Activated CD8-positive, alpha-beta memory T cell treated with anti-CD3 and anti-CD28 coated beads, Interleukin-2, amount 10 ng/mL, durations not matched to agents 7 days and 5 days (primary cell): ENCODE measurements at regions of chr3 and their contacts with region 1.

Region 1: GRCh38 chr3:111616417-111617105 is 21.4 kb upstream of the ZBED2 start:
- DNase-seq: peak; percentile 85
- ATAC-seq: peak; percentile 93
- H3K4me3 Mint-ChIP-seq: peak overlapping the region; percentile 9
- H3K27ac Mint-ChIP-seq: peak overlapping the region; percentile 93
- H3K4me1 Mint-ChIP-seq: peaks cover 73% of the 10 kb centered on the region
- H3K27me3 Mint-ChIP-seq: no peaks in the 10 kb centered on the region

Region 2: GRCh38 chr3:111547631-111548030 is 68.9 kb before region 1 on chr3:
- CTCF ChIA-PET with region 1: interaction called, 16 read pairs
- DNase-seq: peak; percentile 82
- ATAC-seq: peak; percentile 62
- H3K4me3 Mint-ChIP-seq: no peak overlapping the region
- H3K27ac Mint-ChIP-seq: no peak overlapping the region
- H3K4me1 Mint-ChIP-seq: peaks cover 34% of the 10 kb centered on the region
- H3K27me3 Mint-ChIP-seq: no peaks in the 10 kb centered on the region

Region 3: GRCh38 chr3:111585214-111585613 is 31.3 kb before region 1 on chr3:
- CTCF ChIA-PET with region 1: interaction called, 15 read pairs
- DNase-seq: no peak
- ATAC-seq: no peak
- H3K4me3 Mint-ChIP-seq: no peak overlapping the region
- H3K27ac Mint-ChIP-seq: no peak overlapping the region
- H3K4me1 Mint-ChIP-seq: peaks cover 61% of the 10 kb centered on the region
- H3K27me3 Mint-ChIP-seq: no peaks in the 10 kb centered on the region

Region 4: GRCh38 chr3:111604119-111604518 is 12.4 kb before region 1 on chr3:
- CTCF ChIA-PET with region 1: interaction called, 27 read pairs
- DNase-seq: no peak
- ATAC-seq: peak; percentile 45
- H3K4me3 Mint-ChIP-seq: peak overlapping the region; percentile 6
- H3K27ac Mint-ChIP-seq: peak overlapping the region; percentile 82
- H3K4me1 Mint-ChIP-seq: peaks cover 82% of the 10 kb centered on the region
- H3K27me3 Mint-ChIP-seq: no peaks in the 10 kb centered on the region

Region 5: GRCh38 chr3:111768571-111769100 is 152.1 kb after region 1 on chr3:
- CTCF ChIA-PET with region 1: no interaction called
- DNase-seq: no peak
- ATAC-seq: no peak
- H3K4me3 Mint-ChIP-seq: no peak overlapping the region
- H3K27ac Mint-ChIP-seq: no peak overlapping the region
- H3K4me1 Mint-ChIP-seq: no peaks in the 10 kb centered on the region
- H3K27me3 Mint-ChIP-seq: no peaks in the 10 kb centered on the region